Endothelial cell of umbilical vein (primary cell): ENCODE measurements at regions of chr15 and their contacts with region 1.

Region 1: GRCh38 chr15:47516558-47516957 is 200.7 kb upstream of the SEMA6D start:
- DNase-seq: no peak
- H3K4me3 ChIP-seq: no peak overlapping the region
- H3K27ac ChIP-seq: peak overlapping the region; percentile 66
- H3K4me1 ChIP-seq: peaks cover 52% of the 10 kb centered on the region
- H3K27me3 ChIP-seq: peaks cover 0 to 3% of the 10 kb centered on the region in 2 experiments
- CTCF ChIP-seq: no peak
- POLR2A ChIP-seq: no peak

Region 2: DNA sequence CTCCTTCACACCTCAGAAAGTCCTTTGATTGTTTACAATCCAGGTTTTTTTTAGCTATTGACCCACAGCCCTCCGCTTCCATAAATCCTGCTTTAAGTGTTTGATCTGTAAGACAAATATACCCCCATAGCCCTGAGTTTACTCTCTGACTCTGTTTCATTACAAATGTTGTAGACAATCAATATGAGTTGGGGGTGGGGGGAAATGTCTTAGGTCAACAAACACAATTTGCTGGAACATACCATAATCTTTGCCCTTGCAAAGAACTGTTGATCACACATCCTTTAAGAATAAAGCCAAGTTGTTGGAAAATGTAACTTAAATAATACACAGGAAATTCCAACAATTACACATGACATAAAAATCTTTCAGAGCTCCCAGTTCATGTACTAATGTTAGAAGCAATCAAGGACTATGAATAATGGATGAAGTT is 101.0 kb before region 1 on chr15:
- CTCF ChIA-PET with region 1: no interaction called
- POLR2A ChIA-PET with region 1: no interaction called
- dilution Hi-C with region 1: no loop called
- intact Hi-C with region 1: loop called (anchors 2 kb)
- DNase-seq: peak; percentile 91
- H3K4me3 ChIP-seq: no peak overlapping the region
- H3K27ac ChIP-seq: peak overlapping the region; percentile 97
- H3K4me1 ChIP-seq: peaks cover 40% of the 10 kb centered on the region
- H3K27me3 ChIP-seq: no peaks in the 10 kb centered on the region
- CTCF ChIP-seq: no peak
- POLR2A ChIP-seq: no peak

Region 3: DNA sequence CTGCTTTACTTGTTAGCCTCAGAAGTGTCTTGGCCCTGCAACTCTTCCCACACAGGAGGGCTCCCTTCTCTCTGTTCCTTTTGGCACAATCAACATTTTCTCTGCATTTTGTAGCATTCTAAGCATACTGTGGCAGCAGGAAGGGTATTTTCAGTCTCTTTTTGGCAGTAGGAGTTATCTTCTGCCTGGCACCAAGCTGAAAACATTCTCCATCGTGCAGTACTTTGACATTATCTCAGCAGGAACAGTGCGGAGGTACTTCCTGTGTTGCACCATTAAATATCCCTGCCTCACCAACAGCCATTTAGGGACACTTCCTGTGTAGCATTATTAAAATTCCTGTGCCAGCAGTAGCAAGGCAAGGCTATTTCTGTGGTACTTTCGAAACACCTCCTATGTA is 32.5 kb before region 1 on chr15:
- CTCF ChIA-PET with region 1: interaction called, 4 read pairs
- POLR2A ChIA-PET with region 1: no interaction called
- dilution Hi-C with region 1: no loop called
- intact Hi-C with region 1: loop called (anchors 2 kb)
- DNase-seq: peak; percentile 35
- H3K4me3 ChIP-seq: no peak overlapping the region
- H3K27ac ChIP-seq: no peak overlapping the region
- H3K4me1 ChIP-seq: peaks cover 3% of the 10 kb centered on the region
- H3K27me3 ChIP-seq: no peaks in the 10 kb centered on the region
- CTCF ChIP-seq: no peak
- POLR2A ChIP-seq: no peak

Region 4: DNA sequence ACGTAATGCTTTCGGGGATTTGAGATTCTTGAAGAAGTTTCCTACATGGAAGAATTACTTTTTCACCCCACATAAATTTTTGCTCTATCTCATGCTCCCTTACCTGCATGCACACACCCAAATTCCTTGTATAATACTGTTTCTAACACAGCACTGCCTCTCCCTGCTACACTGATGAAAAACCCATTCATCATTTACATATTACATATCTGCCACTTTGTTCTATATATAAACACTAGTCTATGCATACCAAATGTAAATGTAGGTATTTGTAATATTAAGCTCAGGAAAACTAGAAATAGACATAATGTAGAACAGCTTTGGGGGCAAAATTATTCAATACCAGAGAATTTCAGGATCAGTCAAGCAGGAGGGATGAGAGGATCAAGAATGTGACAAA is 18.1 kb after region 1 on chr15:
- CTCF ChIA-PET with region 1: no interaction called
- POLR2A ChIA-PET with region 1: no interaction called
- dilution Hi-C with region 1: no loop called
- intact Hi-C with region 1: no loop called
- DNase-seq: no peak
- H3K4me3 ChIP-seq: no peak overlapping the region
- H3K27ac ChIP-seq: no peak overlapping the region
- H3K4me1 ChIP-seq: no peaks in the 10 kb centered on the region
- H3K27me3 ChIP-seq: no peaks in the 10 kb centered on the region
- CTCF ChIP-seq: no peak
- POLR2A ChIP-seq: no peak

Region 5: GRCh38 chr15:47663101-47663500 is 146.5 kb after region 1 on chr15:
- CTCF ChIA-PET with region 1: no interaction called
- POLR2A ChIA-PET with region 1: no interaction called
- dilution Hi-C with region 1: no loop called
- intact Hi-C with region 1: loop called (anchors 2 kb)
- DNase-seq: peak; percentile 21
- H3K4me3 ChIP-seq: no peak overlapping the region
- H3K27ac ChIP-seq: no peak overlapping the region
- H3K4me1 ChIP-seq: peaks cover 28% of the 10 kb centered on the region
- H3K27me3 ChIP-seq: no peaks in the 10 kb centered on the region
- CTCF ChIP-seq: no peak
- POLR2A ChIP-seq: no peak

Region 6: GRCh38 chr15:48025118-48025517 is 508.6 kb after region 1 on chr15:
- CTCF ChIA-PET with region 1: no interaction called
- POLR2A ChIA-PET with region 1: no interaction called
- dilution Hi-C with region 1: no loop called
- intact Hi-C with region 1: no loop called
- DNase-seq: peak; percentile 2
- H3K4me3 ChIP-seq: no peak overlapping the region
- H3K27ac ChIP-seq: no peak overlapping the region
- H3K4me1 ChIP-seq: no peaks in the 10 kb centered on the region
- H3K27me3 ChIP-seq: peaks cover 0 to 4% of the 10 kb centered on the region in 2 experiments
- CTCF ChIP-seq: no peak
- POLR2A ChIP-seq: no peak